Vagina (tissue), 2 donors: ENCODE measurements at regions of chr1 and their contacts with region 1.

Region 1: DNA sequence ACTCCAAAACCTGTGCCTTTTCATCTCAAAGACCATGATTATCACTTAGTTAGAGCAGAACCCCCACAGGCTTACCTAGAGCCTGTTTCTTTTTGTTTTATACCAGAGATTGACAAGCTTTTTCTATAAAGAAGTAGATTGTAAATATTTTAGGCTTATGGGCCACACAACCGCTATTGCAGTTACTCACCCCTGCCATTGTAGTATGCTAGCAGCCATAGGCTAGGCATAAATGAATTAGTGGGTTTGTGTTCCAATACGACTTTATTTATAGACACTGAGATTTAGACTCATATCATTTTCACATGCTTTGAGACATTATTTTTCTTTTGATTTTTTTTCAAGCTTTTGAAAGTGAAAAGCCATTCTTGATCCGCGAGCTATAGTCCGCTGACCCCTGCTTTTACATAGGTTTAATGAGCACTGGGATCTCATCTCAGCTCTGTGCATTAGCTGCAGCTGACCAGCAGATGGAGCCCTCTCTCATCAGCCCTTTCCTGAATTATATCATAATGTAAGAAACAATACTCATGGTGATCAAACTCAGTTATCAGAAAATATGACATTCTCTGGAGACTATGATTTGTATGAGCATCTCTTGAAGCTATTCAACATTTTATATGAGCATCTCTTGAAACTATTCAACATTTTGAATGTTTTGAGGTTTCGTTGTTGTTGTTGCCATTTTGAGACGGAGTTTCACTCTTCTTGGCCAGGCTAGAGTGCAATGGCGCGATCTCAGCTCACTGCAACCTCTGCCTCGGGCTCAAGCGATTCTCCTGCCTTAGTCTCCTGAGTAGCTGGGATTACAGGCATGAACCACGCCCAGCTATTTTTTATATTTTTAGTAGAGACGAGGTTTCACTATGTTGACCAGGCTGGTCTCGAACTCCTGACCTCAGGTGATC is 111.9 kb upstream of the L1TD1 start:
- DNase-seq: no peak
- H3K4me3 ChIP-seq: no peak overlapping the region
- H3K27ac ChIP-seq: no peak overlapping the region
- H3K4me1 ChIP-seq: no peaks in the 10 kb centered on the region
- H3K27me3 ChIP-seq: no peaks in the 10 kb centered on the region
- CTCF ChIP-seq: peak; percentile 15 to 62 (median 62)
- POLR2A ChIP-seq: no peak

Region 2: GRCh38 chr1:61967750-61968149 is 115.0 kb before region 1 on chr1:
- intact Hi-C with region 1: no loop called
- DNase-seq: no peak
- H3K4me3 ChIP-seq: no peak overlapping the region
- H3K27ac ChIP-seq: no peak overlapping the region
- H3K4me1 ChIP-seq: no peaks in the 10 kb centered on the region
- H3K27me3 ChIP-seq: no peaks in the 10 kb centered on the region
- CTCF ChIP-seq: no peak
- POLR2A ChIP-seq: no peak

Region 3: GRCh38 chr1:62131093-62131725 is 48.5 kb after region 1 on chr1:
- intact Hi-C with region 1: loop called (anchors 10 kb)
- DNase-seq: no peak
- H3K4me3 ChIP-seq: no peak overlapping the region
- H3K27ac ChIP-seq: no peak overlapping the region
- H3K4me1 ChIP-seq: no peaks in the 10 kb centered on the region
- H3K27me3 ChIP-seq: no peaks in the 10 kb centered on the region
- CTCF ChIP-seq: peak in 1 of 3 experiments; percentile 52
- POLR2A ChIP-seq: no peak